Endothelial cell of umbilical vein (primary cell): ENCODE measurements at regions of chr12 and their contacts with region 1.

Region 1: DNA sequence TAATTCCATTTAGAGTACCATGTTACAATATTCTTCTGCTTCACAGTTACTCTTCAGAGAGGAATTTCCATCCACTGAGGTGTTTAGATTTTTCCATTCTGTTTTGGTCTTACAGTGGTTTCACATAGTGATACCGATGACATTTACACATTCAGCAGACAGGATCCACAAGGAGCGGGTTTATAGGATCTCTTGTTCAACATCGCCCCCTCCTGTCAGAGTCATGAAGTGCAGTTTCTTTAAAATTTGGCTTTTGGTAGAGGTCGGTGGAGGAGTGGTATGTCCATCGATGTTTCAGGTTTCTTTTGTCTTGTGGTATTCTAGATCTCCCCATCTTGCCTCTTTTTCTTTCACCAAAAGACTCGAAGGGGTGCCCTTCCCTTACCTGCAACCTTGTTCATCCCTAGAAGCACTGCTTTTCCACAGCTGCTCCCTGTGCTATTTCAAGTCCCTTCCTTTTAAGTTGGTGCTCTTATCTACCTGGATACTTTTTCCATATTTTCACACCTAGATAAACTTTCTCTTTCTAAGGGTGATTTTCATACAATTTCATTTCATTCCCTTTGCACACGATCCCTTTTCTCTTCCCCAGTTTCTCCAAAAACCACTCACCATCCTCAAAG is 181.3 kb downstream of the ITPR2 start:
- DNase-seq: peak; percentile 75
- H3K4me3 ChIP-seq: no peak overlapping the region
- H3K27ac ChIP-seq: no peak overlapping the region
- H3K4me1 ChIP-seq: peaks cover 23% of the 10 kb centered on the region
- H3K27me3 ChIP-seq: no peaks in the 10 kb centered on the region
- CTCF ChIP-seq: peak; percentile 63 to 70
- POLR2A ChIP-seq: no peak

Region 2: DNA sequence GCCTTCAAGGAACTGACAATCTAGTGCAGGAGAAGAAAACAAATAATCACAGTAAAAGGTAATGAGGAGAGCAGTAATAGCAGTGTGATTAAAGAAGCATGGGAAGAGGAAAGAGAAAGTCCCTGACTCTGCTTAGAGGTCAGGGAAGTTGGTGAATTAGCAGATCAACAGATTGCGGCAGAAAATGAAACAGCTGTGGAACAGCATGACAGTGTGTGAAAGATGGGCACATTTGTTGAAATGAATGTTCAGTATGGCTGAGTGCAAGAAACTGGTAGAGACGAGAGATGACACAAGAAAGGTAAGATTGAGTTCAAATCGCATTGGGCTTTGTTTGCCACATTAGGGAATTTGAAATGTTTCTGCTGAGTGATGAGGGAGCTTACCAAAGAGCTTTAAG is 756.9 kb before region 1 on chr12:
- CTCF ChIA-PET with region 1: no interaction called
- POLR2A ChIA-PET with region 1: no interaction called
- dilution Hi-C with region 1: no loop called
- intact Hi-C with region 1: no loop called
- DNase-seq: no peak
- H3K4me3 ChIP-seq: no peak overlapping the region
- H3K27ac ChIP-seq: no peak overlapping the region
- H3K4me1 ChIP-seq: no peaks in the 10 kb centered on the region
- H3K27me3 ChIP-seq: no peaks in the 10 kb centered on the region
- CTCF ChIP-seq: no peak
- POLR2A ChIP-seq: no peak

Region 3: DNA sequence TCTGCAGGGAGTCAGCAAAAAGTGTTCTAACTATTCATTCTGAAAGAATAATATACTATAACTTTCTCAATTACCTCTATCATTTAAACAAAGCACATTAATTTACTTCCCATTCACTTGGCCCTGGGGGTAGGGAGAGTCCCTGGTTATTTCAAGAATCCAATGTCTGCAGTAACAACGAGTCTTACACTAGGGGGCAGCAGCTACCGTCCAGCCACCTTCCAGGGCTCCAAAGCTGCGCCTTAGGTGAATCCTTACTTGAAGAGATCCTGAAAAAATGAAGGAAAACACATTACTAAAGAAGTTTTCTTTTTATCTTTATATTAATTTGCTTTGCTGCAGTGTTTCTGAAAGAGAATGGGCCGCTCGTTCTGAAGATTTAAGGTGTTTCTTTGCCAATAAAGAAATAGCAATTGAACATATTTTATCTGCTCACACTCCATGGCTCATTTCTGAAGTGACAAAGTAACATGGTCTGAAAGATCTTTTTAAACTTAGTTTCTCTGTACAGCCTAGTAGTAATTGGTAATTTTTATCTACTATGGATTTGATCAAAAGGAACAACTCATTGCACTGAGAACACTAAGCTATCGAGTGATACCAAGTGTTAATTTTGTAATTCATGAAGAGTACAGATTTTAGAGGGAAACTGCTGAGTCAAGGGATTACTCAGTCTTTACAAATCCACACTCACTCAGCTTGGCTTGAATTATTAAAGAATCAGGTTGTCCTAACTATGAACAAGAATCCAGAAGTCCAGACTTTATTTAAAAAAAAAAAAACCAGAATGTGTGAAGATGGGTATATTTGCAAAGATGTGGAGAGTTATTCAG is 554.4 kb before region 1 on chr12:
- CTCF ChIA-PET with region 1: interaction called, 17 read pairs
- POLR2A ChIA-PET with region 1: no interaction called
- dilution Hi-C with region 1: no loop called
- intact Hi-C with region 1: loop called (anchors 1 kb)
- DNase-seq: peak; percentile 76
- H3K4me3 ChIP-seq: no peak overlapping the region
- H3K27ac ChIP-seq: no peak overlapping the region
- H3K4me1 ChIP-seq: no peaks in the 10 kb centered on the region
- H3K27me3 ChIP-seq: no peaks in the 10 kb centered on the region
- CTCF ChIP-seq: peak; percentile 88 to 89
- POLR2A ChIP-seq: no peak

Region 4: DNA sequence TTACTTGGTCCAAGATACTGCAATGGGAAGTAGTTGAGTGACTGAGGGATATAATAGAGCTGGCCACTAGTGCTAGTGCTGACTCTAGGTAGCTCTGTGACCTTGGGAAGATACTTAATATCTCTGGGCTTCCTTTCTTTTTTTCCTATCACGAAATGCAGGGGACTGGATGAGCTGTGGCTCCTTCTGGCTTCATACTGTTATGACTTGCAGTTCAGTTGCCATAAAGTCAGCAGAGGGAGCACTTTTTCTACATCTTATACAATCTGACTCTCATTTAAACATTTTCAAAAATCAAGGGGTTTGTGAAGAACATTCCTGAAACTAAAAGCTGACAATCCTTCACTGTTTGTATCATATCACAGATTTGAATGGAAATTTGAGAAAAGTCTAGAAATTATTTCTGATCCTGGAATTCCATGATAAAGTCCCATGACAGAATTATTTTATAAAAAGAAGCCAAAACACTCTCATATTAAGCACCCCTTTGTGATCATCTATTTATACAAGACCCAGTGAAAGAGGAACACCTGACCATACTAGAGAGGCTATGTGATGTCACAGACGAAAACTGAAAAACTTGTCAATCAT is 532.2 kb before region 1 on chr12:
- CTCF ChIA-PET with region 1: interaction called, 33 read pairs
- POLR2A ChIA-PET with region 1: no interaction called
- dilution Hi-C with region 1: no loop called
- intact Hi-C with region 1: loop called (anchors 1 kb)
- DNase-seq: peak; percentile 67
- H3K4me3 ChIP-seq: no peak overlapping the region
- H3K27ac ChIP-seq: no peak overlapping the region
- H3K4me1 ChIP-seq: peaks cover 20% of the 10 kb centered on the region
- H3K27me3 ChIP-seq: peaks cover 11 to 18% of the 10 kb centered on the region in 2 experiments
- CTCF ChIP-seq: peak; percentile 44 to 49
- POLR2A ChIP-seq: no peak

Region 5: DNA sequence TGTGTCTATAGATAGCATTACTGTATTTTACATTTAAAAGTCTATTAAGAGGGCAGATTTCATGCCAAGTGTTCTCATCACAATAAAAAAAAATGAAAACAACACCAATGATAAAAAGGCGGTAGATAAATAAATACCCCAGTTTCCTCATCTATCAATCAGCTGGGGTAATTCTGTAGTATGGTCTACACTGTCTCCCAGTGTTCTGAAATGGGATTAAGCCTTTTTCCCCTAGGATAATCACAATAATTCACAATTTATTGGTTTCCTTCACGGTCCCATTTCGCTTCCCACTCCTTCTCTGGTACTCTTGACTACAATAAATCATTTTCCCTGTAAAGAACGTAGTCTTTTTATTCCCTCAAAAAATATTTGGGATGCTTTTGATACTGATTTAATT is 342.0 kb before region 1 on chr12:
- CTCF ChIA-PET with region 1: no interaction called
- POLR2A ChIA-PET with region 1: no interaction called
- dilution Hi-C with region 1: no loop called
- intact Hi-C with region 1: no loop called
- DNase-seq: no peak
- H3K4me3 ChIP-seq: no peak overlapping the region
- H3K27ac ChIP-seq: no peak overlapping the region
- H3K4me1 ChIP-seq: no peaks in the 10 kb centered on the region
- H3K27me3 ChIP-seq: no peaks in the 10 kb centered on the region
- CTCF ChIP-seq: no peak
- POLR2A ChIP-seq: no peak

Region 6: GRCh38 chr12:26347300-26347699 is 304.4 kb before region 1 on chr12:
- CTCF ChIA-PET with region 1: no interaction called
- POLR2A ChIA-PET with region 1: no interaction called
- dilution Hi-C with region 1: no loop called
- intact Hi-C with region 1: no loop called
- DNase-seq: no peak
- H3K4me3 ChIP-seq: no peak overlapping the region
- H3K27ac ChIP-seq: no peak overlapping the region
- H3K4me1 ChIP-seq: no peaks in the 10 kb centered on the region
- H3K27me3 ChIP-seq: no peaks in the 10 kb centered on the region
- CTCF ChIP-seq: no peak
- POLR2A ChIP-seq: no peak

Region 7: GRCh38 chr12:26434299-26435068 is 217.2 kb before region 1 on chr12:
- CTCF ChIA-PET with region 1: interaction called, 5 read pairs
- POLR2A ChIA-PET with region 1: no interaction called
- dilution Hi-C with region 1: no loop called
- intact Hi-C with region 1: loop called (anchors 1 kb)
- DNase-seq: peak; percentile 69
- H3K4me3 ChIP-seq: no peak overlapping the region
- H3K27ac ChIP-seq: no peak overlapping the region
- H3K4me1 ChIP-seq: no peaks in the 10 kb centered on the region
- H3K27me3 ChIP-seq: no peaks in the 10 kb centered on the region
- CTCF ChIP-seq: peak; percentile 62 to 73
- POLR2A ChIP-seq: no peak

Region 8: DNA sequence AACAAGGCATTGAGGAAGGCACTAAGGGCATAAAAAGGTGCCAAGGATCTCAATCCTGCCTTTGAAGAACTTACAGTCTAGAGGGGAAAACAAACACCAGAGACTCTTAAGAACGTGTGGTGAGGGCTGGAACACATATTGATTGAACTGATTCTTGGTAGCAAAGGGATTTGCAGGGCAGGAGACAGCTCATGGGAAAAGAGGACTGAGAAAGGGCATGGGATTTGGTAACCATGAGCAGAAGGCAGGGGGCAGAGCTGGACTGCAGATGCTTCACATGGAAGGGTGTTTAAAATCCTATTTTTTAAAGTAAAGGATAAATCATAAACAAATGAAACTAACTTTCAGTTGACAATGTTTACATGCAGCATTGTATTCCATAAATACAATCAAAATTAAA is 21.8 kb before region 1 on chr12:
- CTCF ChIA-PET with region 1: interaction called, 90 read pairs
- POLR2A ChIA-PET with region 1: interaction called, 3 read pairs
- dilution Hi-C with region 1: no loop called
- intact Hi-C with region 1: loop called (anchors 1 kb)
- DNase-seq: peak; percentile 61
- H3K4me3 ChIP-seq: peak overlapping the region in 1 of 3 experiments; percentile 31
- H3K27ac ChIP-seq: peak overlapping the region; percentile 78
- H3K4me1 ChIP-seq: peaks cover 32% of the 10 kb centered on the region
- H3K27me3 ChIP-seq: no peaks in the 10 kb centered on the region
- CTCF ChIP-seq: peak; percentile 27 to 32
- POLR2A ChIP-seq: no peak

Region 9: DNA sequence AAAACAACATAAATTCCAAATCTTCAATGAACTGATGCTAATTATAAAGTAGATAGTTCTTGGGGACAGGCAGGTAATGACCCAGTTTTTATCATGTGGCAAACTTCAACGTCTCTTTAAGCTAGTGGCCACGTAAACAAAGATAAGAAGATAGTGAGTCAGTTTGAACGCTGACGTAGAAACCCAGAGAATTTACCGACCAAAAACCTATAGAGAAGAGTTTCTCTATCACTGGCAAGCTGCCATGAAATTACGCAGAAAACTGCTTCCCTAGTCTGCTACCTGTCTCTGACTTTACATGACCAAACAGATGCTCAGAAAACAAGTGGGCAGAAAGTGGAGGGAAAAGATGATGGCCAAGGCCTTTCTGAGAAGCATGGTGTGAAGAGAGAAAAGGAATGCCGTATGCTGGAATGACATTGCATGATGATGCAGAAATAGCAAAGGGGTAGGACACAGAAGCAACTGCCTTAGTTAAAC is 45.0 kb after region 1 on chr12:
- CTCF ChIA-PET with region 1: interaction called, 82 read pairs
- POLR2A ChIA-PET with region 1: interaction called, 3 read pairs
- dilution Hi-C with region 1: no loop called
- intact Hi-C with region 1: loop called (anchors 1 kb)
- DNase-seq: peak; percentile 80
- H3K4me3 ChIP-seq: peak overlapping the region in 1 of 3 experiments; percentile 16
- H3K27ac ChIP-seq: peak overlapping the region; percentile 100
- H3K4me1 ChIP-seq: peaks cover 54% of the 10 kb centered on the region
- H3K27me3 ChIP-seq: no peaks in the 10 kb centered on the region
- CTCF ChIP-seq: no peak
- POLR2A ChIP-seq: no peak

Region 10: GRCh38 chr12:27723212-27723611 is 1071.5 kb after region 1 on chr12:
- CTCF ChIA-PET with region 1: no interaction called
- POLR2A ChIA-PET with region 1: no interaction called
- dilution Hi-C with region 1: no loop called
- intact Hi-C with region 1: no loop called
- DNase-seq: no peak
- H3K4me3 ChIP-seq: no peak overlapping the region
- H3K27ac ChIP-seq: no peak overlapping the region
- H3K4me1 ChIP-seq: no peaks in the 10 kb centered on the region
- H3K27me3 ChIP-seq: no peaks in the 10 kb centered on the region
- CTCF ChIP-seq: no peak
- POLR2A ChIP-seq: no peak